ENCODE measurements at regions of chr2 and their contacts with region 1.

Region 1: GRCh38 chr2:127064642-127065250 is 42.2 kb downstream of the BIN1 start:
- DNase-seq: no peak
- ATAC-seq: peak; percentile 78
- H3K4me3 Mint-ChIP-seq: no peak overlapping the region
- H3K27ac Mint-ChIP-seq: no peak overlapping the region
- H3K4me1 Mint-ChIP-seq: peaks cover 13% of the 10 kb centered on the region
- H3K27me3 Mint-ChIP-seq: no peaks in the 10 kb centered on the region
- CTCF ChIP-seq: no peak

Region 2: GRCh38 chr2:127086990-127087790 is 22.4 kb after region 1 on chr2:
- CTCF ChIA-PET with region 1: interaction called, 10 read pairs
- POLR2A ChIA-PET with region 1: interaction called, 15 read pairs
- intact Hi-C with region 1: loop called (anchors 1 kb)
- DNase-seq: peak; percentile 48
- ATAC-seq: peak; percentile 25
- H3K4me3 Mint-ChIP-seq: peak overlapping the region; percentile 82
- H3K27ac Mint-ChIP-seq: peak overlapping the region; percentile 91
- H3K4me1 Mint-ChIP-seq: peaks cover 67% of the 10 kb centered on the region
- H3K27me3 Mint-ChIP-seq: no peaks in the 10 kb centered on the region
- CTCF ChIP-seq: no peak

Region 3: DNA sequence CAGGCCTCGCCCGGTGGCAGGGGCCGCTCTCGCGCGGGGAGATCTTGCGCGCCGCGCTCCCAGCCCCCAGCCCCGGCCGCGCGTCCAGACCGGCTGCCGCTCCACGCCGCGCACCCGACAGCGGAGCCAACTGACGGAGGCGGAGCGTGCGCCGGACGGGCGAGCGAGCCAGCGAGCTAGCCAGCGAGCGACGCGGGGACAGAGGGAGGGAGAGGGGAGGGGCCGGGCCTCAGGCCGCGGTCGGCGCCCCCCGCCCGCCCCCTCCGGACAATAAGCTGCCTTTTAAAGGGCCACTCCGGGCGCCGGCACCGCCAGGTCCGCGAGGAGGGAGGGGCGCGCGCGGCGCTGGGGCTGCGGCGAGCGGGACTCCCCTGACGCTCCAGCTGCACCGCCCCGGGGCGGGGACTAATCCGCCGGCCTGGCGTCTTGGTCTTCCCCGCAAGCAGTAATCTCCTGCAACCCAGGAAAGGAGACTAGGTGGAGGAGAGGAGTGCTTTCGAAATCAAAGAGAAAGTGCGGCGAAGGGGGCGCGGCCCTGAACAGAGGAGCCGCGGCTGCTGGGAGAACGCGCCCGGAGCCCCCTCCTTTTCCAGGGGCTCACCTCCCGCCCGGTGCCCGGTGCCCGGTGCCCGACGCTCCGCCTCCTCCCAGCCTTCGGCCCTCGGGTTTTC is 42.3 kb after region 1 on chr2 and contains the start of gene BIN1:
- CTCF ChIA-PET with region 1: interaction called, 8 read pairs
- POLR2A ChIA-PET with region 1: interaction called, 5 read pairs
- intact Hi-C with region 1: loop called (anchors 1 kb)
- DNase-seq: peak; percentile 75
- ATAC-seq: peak; percentile 89
- H3K4me3 Mint-ChIP-seq: peak within 1 kb of the TSS; percentile 86
- H3K27ac Mint-ChIP-seq: no peak within 1 kb of the TSS
- H3K4me1 Mint-ChIP-seq: peaks cover 13% of the 10 kb centered on the region
- H3K27me3 Mint-ChIP-seq: peaks cover 8% of the 10 kb centered on the region
- CTCF ChIP-seq: no peak
- total RNA-seq, gene BIN1: 62.5 and 63.5 TPM in 2 replicates

Region 4: DNA sequence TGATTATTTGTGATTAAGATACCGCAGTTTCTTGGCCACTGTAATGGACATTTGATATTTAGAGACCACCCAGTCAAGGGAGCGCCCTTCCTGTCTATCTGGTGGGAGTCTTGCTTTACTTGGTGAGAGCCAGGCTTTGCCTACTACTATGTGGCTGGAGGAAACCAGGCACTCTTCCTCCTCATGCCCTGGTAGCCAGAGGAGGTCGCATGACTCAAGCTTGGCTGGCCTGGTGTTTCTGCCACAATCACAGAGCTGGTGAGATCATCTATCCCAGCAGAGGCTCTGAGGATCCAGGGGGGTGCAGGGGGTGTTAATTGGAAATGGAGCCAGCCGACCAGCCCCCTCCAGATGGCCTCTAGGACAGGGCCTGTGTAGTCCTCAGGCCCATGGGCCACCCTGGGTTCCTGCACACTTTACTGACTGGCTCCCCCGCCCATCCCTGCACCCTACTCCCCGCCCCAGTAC is 89.0 kb after region 1 on chr2:
- CTCF ChIA-PET with region 1: interaction called, 3 read pairs
- POLR2A ChIA-PET with region 1: interaction called, 7 read pairs
- intact Hi-C with region 1: loop called (anchors 5 kb)
- DNase-seq: no peak
- ATAC-seq: no peak
- H3K4me3 Mint-ChIP-seq: no peak overlapping the region
- H3K27ac Mint-ChIP-seq: no peak overlapping the region
- H3K4me1 Mint-ChIP-seq: peaks cover 18% of the 10 kb centered on the region
- H3K27me3 Mint-ChIP-seq: no peaks in the 10 kb centered on the region
- CTCF ChIP-seq: no peak

Region 5: DNA sequence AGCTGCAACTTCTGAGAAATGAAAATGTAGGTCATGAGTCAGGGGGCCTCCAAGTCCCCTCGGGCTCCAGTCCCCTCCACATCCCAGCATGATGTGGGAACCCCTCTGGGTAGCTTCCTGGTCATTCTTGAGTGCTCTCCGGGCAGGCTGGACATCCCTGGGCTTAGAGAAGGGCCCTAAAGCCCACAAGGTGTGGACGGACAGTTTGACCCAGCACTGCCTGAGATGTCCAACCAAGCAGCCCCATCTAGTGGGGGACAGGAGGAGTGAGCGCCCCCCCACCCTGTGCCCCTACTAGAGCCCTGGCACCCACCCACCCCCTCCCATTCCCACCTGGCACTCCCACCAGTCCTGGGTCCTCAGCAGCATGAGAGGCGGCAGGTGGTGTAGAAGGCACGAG is 109.4 kb after region 1 on chr2:
- CTCF ChIA-PET with region 1: interaction called, 15 read pairs
- POLR2A ChIA-PET with region 1: no interaction called
- intact Hi-C with region 1: loop called (anchors 1 kb)
- DNase-seq: no peak
- ATAC-seq: no peak
- H3K4me3 Mint-ChIP-seq: no peak overlapping the region
- H3K27ac Mint-ChIP-seq: no peak overlapping the region
- H3K4me1 Mint-ChIP-seq: no peaks in the 10 kb centered on the region
- H3K27me3 Mint-ChIP-seq: peaks cover 2% of the 10 kb centered on the region
- CTCF ChIP-seq: no peak

Region 6: GRCh38 chr2:127293748-127294562 is 229.2 kb after region 1 on chr2 and contains the start of gene ERCC3:
- CTCF ChIA-PET with region 1: no interaction called
- POLR2A ChIA-PET with region 1: interaction called, 3 read pairs
- intact Hi-C with region 1: loop called (anchors 5 kb)
- DNase-seq: peak; percentile 78
- ATAC-seq: peak; percentile 98
- H3K4me3 Mint-ChIP-seq: peak within 1 kb of the TSS; percentile 97
- H3K27ac Mint-ChIP-seq: peak within 1 kb of the TSS; percentile 95
- H3K4me1 Mint-ChIP-seq: peaks cover 25% of the 10 kb centered on the region
- H3K27me3 Mint-ChIP-seq: no peaks in the 10 kb centered on the region
- CTCF ChIP-seq: no peak
- total RNA-seq, gene ERCC3: 55.9 and 65.6 TPM in 2 replicates

Measured in activated B cell treated with CpG ODN at 0.5 μM for 24 hours (primary cell).